ENCODE measurements at regions of chr1 and their contacts with region 1.

Region 1: DNA sequence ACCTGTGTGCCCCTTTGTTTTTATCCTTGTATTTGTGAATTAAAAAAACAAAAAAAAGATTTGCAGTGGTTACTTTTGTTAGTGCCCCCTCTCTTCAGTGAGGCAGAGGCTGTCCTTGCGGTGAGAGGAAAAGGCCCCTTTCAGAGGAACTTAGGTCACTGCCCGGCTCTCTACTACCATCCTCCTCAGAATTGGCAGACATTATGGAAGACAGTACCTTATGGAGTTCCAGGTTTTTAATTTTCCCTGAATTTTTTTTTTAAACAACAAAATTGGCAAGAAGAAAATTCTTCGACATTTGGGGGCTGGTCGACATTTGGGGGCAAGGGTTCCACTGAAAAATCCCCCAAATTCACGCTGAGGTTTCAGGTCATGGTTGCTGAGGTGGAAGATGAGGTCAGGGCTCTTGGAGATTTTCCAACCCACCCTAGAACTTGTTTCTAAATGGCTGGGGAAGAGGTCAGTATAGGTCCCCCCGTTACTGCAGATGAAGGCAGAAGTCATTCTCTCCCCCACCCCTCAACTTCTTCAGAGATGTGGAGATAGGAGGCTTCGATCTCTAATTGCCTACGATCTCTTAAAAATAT is 5.3 kb downstream of the RXFP4 start:
- DNase-seq: no peak
- H3K4me3 Mint-ChIP-seq: peak overlapping the region; percentile 40
- H3K27ac Mint-ChIP-seq: peak overlapping the region; percentile 83
- H3K4me1 Mint-ChIP-seq: peaks cover 44% of the 10 kb centered on the region
- H3K27me3 Mint-ChIP-seq: no peaks in the 10 kb centered on the region

Region 2: GRCh38 chr1:155934097-155934935 is 12.4 kb before region 1 on chr1 and contains the start of gene KHDC4:
- CTCF ChIA-PET with region 1: interaction called, 10 read pairs
- POLR2A ChIA-PET with region 1: no interaction called
- DNase-seq: peak; percentile 98
- H3K4me3 Mint-ChIP-seq: no peak within 1 kb of the TSS
- H3K27ac Mint-ChIP-seq: no peak within 1 kb of the TSS
- H3K4me1 Mint-ChIP-seq: peaks cover 45% of the 10 kb centered on the region
- H3K27me3 Mint-ChIP-seq: no peaks in the 10 kb centered on the region
- total RNA-seq, gene KHDC4: 66.3 to 67.3 TPM

Measured in activated CD4-positive, alpha-beta T cell treated with anti-CD3 and anti-CD28 coated beads, Interleukin-2, amount 10 ng/mL, durations not matched to agents 7 days and 5 days (primary cell).